IMR-90 (cell line): ENCODE measurements at regions of chr7 and their contacts with region 1.

Region 1: GRCh38 chr7:104848138-104848990 is 165.6 kb upstream of the KMT2E start:
- DNase-seq: peak; percentile 34
- ATAC-seq: peak; percentile 95
- H3K4me3 ChIP-seq: no peak overlapping the region
- H3K27ac ChIP-seq: no peak overlapping the region
- H3K4me1 ChIP-seq: no peaks in the 10 kb centered on the region
- H3K27me3 ChIP-seq: peaks cover 32% of the 10 kb centered on the region
- CTCF ChIP-seq: peak; percentile 68
- POLR2A ChIP-seq: no peak
- RAD21 ChIP-seq: peak; percentile 60

Region 2: DNA sequence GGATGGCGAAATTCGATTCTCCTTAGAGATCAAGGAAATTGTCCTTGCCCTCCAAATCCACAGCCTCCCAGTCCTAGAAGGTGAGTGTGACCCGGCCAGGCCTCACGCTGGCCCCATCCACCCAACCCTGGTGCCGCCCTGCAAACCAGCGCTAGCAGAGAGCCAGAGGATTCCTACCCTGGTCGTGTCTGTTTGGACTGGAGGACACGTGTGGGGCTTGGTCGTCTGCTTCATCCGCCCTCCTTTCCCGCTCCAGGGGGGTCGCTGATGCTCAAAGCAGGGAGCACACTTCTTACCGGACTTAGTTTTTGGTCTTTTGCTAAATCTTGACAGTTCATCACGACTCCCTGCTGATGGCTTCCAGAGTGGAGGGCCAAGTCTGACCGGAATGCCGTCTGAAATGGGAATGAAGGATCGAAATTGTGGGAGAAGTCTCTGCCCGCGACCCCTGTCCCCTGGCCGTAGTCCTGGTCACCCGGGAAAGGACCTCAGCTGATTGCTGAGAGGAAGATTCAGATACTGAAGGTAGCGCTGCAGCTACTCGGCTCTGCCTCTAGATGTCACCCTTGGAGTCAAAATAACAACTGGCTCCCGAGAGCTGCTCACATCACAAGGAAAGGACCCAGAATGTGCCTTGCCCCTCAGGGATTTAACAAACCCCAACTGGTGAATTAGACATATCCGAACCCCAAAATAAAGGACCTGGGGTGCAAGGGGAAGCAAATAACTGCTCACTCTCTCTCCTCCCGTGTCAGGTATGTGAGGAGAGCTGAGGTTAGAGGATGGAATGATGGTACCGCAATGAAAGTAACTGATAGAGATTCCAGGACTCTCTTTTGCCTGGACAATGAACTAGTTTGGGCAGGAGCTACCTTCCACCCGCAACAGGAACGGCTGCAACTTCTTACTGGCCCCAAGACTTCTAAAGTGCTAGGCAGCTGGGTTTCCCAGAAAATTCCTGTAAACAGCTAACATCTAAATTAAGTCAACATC is 617.0 kb before region 1 on chr7:
- CTCF ChIA-PET with region 1: interaction called, 3 read pairs
- POLR2A ChIA-PET with region 1: no interaction called
- dilution Hi-C with region 1: no loop called
- in situ Hi-C with region 1: loop called (anchors 10 kb)
- intact Hi-C with region 1: loop called (anchors 1 kb)
- DNase-seq: peak; percentile 58
- ATAC-seq: peak; percentile 100
- H3K4me3 ChIP-seq: no peak overlapping the region
- H3K27ac ChIP-seq: no peak overlapping the region
- H3K4me1 ChIP-seq: no peaks in the 10 kb centered on the region
- H3K27me3 ChIP-seq: 0 out of 2 replicates have a peak, but pooled peaks cover 2% of the 10 kb centered on the region
- CTCF ChIP-seq: peak; percentile 76
- POLR2A ChIP-seq: no peak
- RAD21 ChIP-seq: peak; percentile 69

Region 3: GRCh38 chr7:104272767-104273384 is 575.5 kb before region 1 on chr7:
- CTCF ChIA-PET with region 1: no interaction called
- POLR2A ChIA-PET with region 1: no interaction called
- dilution Hi-C with region 1: no loop called
- in situ Hi-C with region 1: no loop called
- intact Hi-C with region 1: loop called (anchors 2 kb)
- DNase-seq: peak; percentile 57
- ATAC-seq: peak; percentile 83
- H3K4me3 ChIP-seq: no peak overlapping the region
- H3K27ac ChIP-seq: no peak overlapping the region
- H3K4me1 ChIP-seq: no peaks in the 10 kb centered on the region
- H3K27me3 ChIP-seq: no peaks in the 10 kb centered on the region
- CTCF ChIP-seq: peak; percentile 56
- POLR2A ChIP-seq: no peak
- RAD21 ChIP-seq: peak; percentile 51

Region 4: DNA sequence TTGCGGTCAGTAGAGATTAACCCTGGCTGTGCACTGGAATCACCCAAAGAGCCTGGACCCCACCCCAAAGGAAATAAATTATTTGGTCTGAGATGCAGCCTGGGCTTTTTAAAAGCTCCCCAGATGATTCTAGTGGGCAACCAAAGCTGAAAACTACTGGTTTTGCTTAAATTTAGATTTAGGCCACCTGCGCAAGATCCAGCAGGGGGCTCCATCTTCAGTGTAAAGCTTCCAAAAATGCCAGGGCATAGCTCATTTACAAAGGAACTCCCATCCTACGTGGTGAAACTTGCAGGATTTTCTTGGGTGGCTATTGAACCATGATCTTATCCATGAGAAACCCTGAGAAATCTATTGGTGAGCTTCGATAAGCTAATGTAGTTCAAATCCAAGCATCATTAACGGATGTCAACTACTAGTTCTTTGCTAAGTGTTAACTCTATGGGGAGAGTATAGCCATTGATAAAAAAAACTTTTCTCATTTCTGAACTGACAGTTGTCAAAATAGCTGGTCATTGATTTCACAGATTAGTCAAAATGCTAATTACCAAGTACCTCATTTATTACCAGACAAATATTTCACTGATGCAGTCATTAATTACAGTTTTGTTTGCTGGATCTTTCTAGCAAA is 204.7 kb before region 1 on chr7:
- CTCF ChIA-PET with region 1: interaction called, 7 read pairs
- POLR2A ChIA-PET with region 1: no interaction called
- dilution Hi-C with region 1: no loop called
- in situ Hi-C with region 1: no loop called
- intact Hi-C with region 1: loop called (anchors 5 kb)
- DNase-seq: no peak
- ATAC-seq: no peak
- H3K4me3 ChIP-seq: no peak overlapping the region
- H3K27ac ChIP-seq: no peak overlapping the region
- H3K4me1 ChIP-seq: no peaks in the 10 kb centered on the region
- H3K27me3 ChIP-seq: no peaks in the 10 kb centered on the region
- CTCF ChIP-seq: peak; percentile 44
- POLR2A ChIP-seq: no peak
- RAD21 ChIP-seq: peak; percentile 37

Region 5: DNA sequence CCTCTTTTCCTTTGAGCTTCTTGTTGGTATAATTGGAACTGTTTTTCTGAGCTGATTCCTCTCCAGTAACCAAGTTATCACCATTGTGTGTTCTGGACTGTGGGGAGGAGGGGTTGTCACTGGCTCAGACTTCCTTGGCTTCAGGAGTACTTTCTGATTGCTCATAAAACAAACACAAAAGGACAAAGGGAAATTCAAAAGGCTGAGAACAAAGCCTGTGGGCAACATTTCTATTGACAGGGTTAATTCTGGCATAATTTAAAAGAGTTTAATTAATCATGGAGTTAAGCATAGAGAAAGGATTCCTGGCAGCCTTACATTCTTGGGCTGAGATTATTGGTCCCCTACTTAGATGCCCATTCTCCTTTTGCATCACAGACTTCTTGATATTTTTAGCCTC is 57.3 kb before region 1 on chr7:
- CTCF ChIA-PET with region 1: no interaction called
- POLR2A ChIA-PET with region 1: no interaction called
- dilution Hi-C with region 1: no loop called
- in situ Hi-C with region 1: no loop called
- intact Hi-C with region 1: no loop called
- DNase-seq: no peak
- ATAC-seq: no peak
- H3K4me3 ChIP-seq: no peak overlapping the region
- H3K27ac ChIP-seq: no peak overlapping the region
- H3K4me1 ChIP-seq: no peaks in the 10 kb centered on the region
- H3K27me3 ChIP-seq: peaks cover 2% of the 10 kb centered on the region; the same call in 1 of the 2 replicates
- CTCF ChIP-seq: no peak
- POLR2A ChIP-seq: no peak
- RAD21 ChIP-seq: no peak

Region 6: GRCh38 chr7:104814631-104815400 is 33.5 kb before region 1 on chr7:
- CTCF ChIA-PET with region 1: no interaction called
- POLR2A ChIA-PET with region 1: no interaction called
- dilution Hi-C with region 1: no loop called
- in situ Hi-C with region 1: no loop called
- intact Hi-C with region 1: no loop called
- DNase-seq: no peak
- ATAC-seq: no peak
- H3K4me3 ChIP-seq: no peak overlapping the region
- H3K27ac ChIP-seq: no peak overlapping the region
- H3K4me1 ChIP-seq: no peaks in the 10 kb centered on the region
- H3K27me3 ChIP-seq: peaks cover 2% of the 10 kb centered on the region; the same call in 1 of the 2 replicates
- CTCF ChIP-seq: no peak
- POLR2A ChIP-seq: no peak
- RAD21 ChIP-seq: no peak

Region 7: DNA sequence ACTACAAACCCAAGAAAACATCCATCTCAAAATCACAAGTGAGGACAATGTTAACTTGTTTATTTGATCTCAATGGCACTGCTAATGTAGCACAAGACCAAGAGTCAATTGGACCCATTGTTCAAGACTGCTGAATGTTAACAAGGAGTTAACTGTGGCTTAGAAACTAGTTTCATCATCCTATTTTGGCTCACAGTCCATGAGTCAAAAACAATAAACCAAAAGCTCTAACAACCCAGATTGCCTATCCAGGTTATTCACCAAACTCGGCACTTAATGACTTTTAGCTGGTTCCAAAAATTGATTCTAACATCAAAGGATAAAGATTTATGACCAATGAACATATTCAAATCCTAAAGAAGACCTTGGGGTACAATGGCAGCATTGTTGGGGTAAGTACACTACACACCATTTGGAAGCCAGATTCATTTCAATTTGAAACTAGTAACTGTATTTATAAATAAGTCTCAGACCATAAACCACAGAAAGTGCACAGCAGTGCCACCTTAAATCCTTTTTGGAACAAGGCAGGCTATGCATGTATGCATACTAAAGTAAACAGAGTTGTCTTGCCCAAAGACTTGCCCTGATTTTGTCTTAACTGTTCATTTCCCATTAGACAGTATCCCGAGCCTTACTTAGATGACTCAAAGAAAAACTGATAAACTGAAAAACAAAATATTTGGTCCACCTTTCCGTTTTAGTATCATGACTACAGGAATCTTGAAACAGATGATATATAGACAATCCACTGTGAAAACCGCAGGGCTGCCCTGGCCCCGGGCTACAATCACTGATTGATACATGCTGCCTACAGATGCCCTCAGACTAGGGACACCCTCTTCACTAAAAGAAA is 455.9 kb after region 1 on chr7:
- CTCF ChIA-PET with region 1: no interaction called
- POLR2A ChIA-PET with region 1: no interaction called
- dilution Hi-C with region 1: no loop called
- in situ Hi-C with region 1: no loop called
- intact Hi-C with region 1: no loop called
- DNase-seq: peak; percentile 77
- ATAC-seq: peak; percentile 89
- H3K4me3 ChIP-seq: no peak overlapping the region
- H3K27ac ChIP-seq: no peak overlapping the region
- H3K4me1 ChIP-seq: peaks cover 5% of the 10 kb centered on the region
- H3K27me3 ChIP-seq: no peaks in the 10 kb centered on the region
- CTCF ChIP-seq: no peak
- POLR2A ChIP-seq: no peak
- RAD21 ChIP-seq: no peak